Dendritic cell treated with granulocyte-macrophage colony-stimulating factor and Interleukin-4, amounts not matched to agents 40 ng/mL and 50 ng/mL, for 4 days (primary cell): ENCODE measurements at regions of chr3 and their contacts with region 1.

Region 1: DNA sequence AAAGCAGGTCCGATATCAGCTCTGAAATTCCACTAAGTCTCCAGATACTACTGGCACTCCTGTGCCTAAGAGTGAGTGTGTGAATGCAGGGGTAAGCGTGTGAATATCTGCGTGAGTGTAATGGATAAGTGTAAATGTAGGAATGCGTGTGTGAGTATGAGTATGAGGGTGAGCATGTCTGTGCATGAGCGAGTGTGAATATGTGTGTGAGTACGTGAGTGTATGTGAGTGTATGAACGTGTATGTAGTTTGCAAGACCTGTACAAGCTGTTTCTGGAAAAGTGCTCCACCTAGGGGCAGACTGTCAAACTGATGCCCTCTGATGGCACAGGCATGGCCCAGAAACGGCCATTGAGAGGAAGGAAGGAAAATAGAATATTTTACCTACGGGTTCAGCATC is 24.4 kb upstream of the FRMD4B start:
- H3K4me3 Mint-ChIP-seq: no peak overlapping the region
- H3K27ac Mint-ChIP-seq: peak overlapping the region; percentile 67
- H3K4me1 Mint-ChIP-seq: peaks cover 24% of the 10 kb centered on the region
- H3K27me3 Mint-ChIP-seq: no peaks in the 10 kb centered on the region

Region 2: DNA sequence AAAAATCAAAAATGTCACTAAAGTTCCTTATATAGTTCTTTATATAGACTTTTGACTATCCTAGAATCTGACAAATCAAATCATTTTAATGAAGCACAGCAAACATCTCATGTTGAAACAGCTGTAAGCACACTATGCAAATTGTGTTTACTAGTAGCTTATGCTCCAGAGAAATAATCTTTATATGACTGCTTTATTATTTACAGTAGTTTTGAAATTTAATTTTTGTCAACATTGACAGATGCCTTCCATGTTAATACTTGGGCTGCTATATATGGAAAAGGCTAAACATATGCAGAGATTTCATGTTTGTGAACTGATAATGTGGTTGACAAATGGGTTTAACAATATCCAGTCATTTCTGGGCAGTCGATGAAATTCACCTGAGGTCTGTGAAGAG is 1094.7 kb before region 1 on chr3:
- intact Hi-C with region 1: no loop called
- H3K4me3 Mint-ChIP-seq: no peak overlapping the region
- H3K27ac Mint-ChIP-seq: no peak overlapping the region
- H3K4me1 Mint-ChIP-seq: no peaks in the 10 kb centered on the region
- H3K27me3 Mint-ChIP-seq: no peaks in the 10 kb centered on the region

Region 3: GRCh38 chr3:69306239-69307185 is 103.7 kb before region 1 on chr3:
- intact Hi-C with region 1: loop called (anchors 5 kb)
- H3K4me3 Mint-ChIP-seq: no peak overlapping the region
- H3K27ac Mint-ChIP-seq: peak overlapping the region; percentile 51
- H3K4me1 Mint-ChIP-seq: peaks cover 16% of the 10 kb centered on the region
- H3K27me3 Mint-ChIP-seq: no peaks in the 10 kb centered on the region

Region 4: GRCh38 chr3:69370156-69370883 is 39.9 kb before region 1 on chr3:
- intact Hi-C with region 1: loop called (anchors 5 kb)
- H3K4me3 Mint-ChIP-seq: peak overlapping the region; percentile 30
- H3K27ac Mint-ChIP-seq: peak overlapping the region; percentile 73
- H3K4me1 Mint-ChIP-seq: peaks cover 34% of the 10 kb centered on the region
- H3K27me3 Mint-ChIP-seq: no peaks in the 10 kb centered on the region